ENCODE measurements at regions of chr1 and their contacts with region 1.

Region 1: DNA sequence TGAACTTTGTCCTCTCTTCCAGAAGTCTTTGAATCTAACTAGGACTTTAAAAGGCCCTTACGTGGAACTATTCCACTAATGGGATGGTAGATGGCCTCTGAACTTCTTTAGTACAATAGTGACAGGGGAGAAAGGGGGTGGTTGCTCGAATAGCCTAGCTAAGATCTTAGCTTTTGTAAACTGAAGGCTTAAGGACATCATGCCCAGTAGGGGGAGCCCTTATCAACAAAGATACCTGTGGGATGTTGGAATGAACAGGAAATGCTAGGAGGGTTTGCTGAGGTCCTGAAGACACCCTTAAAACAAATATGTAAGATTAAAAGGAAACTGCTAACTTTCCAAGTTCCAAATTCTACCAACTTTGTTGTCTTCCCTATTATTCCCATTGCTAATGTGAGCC is 33.2 kb downstream of the NHLH2 start:
- DNase-seq: peak in 1 of 2 donors; percentile 71
- ATAC-seq: peak; percentile 42 to 69 (median 68)
- H3K4me3 ChIP-seq: no peak overlapping the region
- H3K4me3 Mint-ChIP-seq: no peak overlapping the region
- H3K27ac ChIP-seq: no peak overlapping the region
- H3K27ac Mint-ChIP-seq: no peak overlapping the region
- H3K4me1 ChIP-seq: no peaks in the 10 kb centered on the region
- H3K4me1 Mint-ChIP-seq: no peaks in the 10 kb centered on the region
- H3K27me3 ChIP-seq: no peaks in the 10 kb centered on the region
- H3K27me3 Mint-ChIP-seq: peaks cover 5 to 29% of the 10 kb centered on the region in 2 donors
- CTCF ChIP-seq: peak; percentile 79

Region 2: DNA sequence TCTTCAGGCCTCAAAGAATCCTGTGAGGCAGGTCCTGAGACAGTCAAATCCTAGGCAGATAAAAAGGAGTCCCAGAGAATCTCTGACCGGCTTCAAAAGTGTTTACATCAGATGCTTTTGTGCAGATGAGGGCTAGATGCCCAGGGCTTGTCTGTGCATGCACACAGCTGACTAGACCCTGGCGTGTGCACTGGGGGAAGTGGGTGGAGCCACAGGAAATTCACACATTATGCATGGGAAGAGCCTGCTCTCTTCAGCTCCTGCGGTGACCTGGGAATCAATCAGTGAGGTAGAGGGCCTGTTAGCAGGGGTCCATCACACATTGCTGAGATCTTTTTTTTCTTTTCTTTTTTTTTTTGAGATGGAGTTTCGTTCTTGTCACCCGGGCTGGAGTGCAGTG is 69.8 kb after region 1 on chr1:
- intact Hi-C with region 1: no loop called
- DNase-seq: no peak
- ATAC-seq: no peak
- H3K4me3 ChIP-seq: no peak overlapping the region
- H3K4me3 Mint-ChIP-seq: no peak overlapping the region
- H3K27ac ChIP-seq: no peak overlapping the region
- H3K27ac Mint-ChIP-seq: no peak overlapping the region
- H3K4me1 ChIP-seq: no peaks in the 10 kb centered on the region
- H3K4me1 Mint-ChIP-seq: no peaks in the 10 kb centered on the region
- H3K27me3 ChIP-seq: no peaks in the 10 kb centered on the region
- H3K27me3 Mint-ChIP-seq: peaks cover 22 to 56% of the 10 kb centered on the region in 2 donors
- CTCF ChIP-seq: no peak

Region 3: DNA sequence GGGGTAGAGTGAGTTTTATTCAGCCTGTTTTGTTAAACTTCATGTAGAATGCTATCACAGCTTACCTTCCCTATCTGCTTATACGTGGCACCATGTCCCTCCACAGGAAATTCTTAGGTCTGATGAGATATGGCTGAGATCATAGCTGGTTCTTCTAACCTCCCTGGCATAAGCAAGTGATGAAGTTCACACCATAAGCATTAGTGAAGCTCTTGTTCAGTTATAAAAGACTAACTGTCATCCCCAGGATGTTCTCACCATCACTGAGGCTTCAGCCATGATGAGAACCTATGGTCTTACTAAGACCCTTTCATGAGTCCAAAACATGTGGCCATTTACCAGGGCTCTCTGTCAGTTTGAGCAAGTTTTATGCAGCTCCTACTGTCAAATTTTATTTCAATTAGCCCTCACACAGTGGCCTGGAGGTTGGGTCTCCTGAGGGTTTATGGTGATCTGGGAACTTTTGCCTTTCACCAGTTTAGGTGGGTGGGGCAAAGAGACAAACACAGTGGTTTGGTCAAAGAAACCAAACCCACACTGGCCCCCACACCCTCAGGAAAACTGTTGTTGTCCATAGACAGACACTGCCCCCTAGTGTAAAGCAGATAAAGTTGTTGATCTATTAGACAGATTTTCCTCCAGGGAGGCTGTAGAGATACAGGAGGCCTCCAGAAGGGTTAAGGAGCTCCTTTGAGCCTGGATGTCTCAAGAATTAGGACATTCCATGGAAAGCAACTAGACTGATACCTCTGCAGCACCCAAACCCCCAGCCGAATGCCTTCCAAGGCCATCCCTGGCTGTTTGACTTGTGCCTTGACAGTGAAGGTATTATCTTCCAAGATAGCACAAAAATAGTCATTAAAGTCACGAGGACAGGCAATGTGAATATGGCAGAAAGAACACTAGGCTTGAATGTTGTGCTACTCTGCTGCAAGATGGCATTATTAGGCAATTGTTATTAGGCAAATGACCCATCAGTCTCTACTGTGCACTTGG is 173.6 kb after region 1 on chr1:
- intact Hi-C with region 1: loop called (anchors 1 kb)
- DNase-seq: peak; percentile 21 to 51
- ATAC-seq: peak; percentile 56 to 63 (median 62)
- H3K4me3 ChIP-seq: no peak overlapping the region
- H3K4me3 Mint-ChIP-seq: no peak overlapping the region
- H3K27ac ChIP-seq: no peak overlapping the region
- H3K27ac Mint-ChIP-seq: peak overlapping the region in 1 of 2 donors; percentile 44
- H3K4me1 ChIP-seq: peaks cover 12% of the 10 kb centered on the region
- H3K4me1 Mint-ChIP-seq: peaks cover 17 to 32% of the 10 kb centered on the region in 2 donors
- H3K27me3 ChIP-seq: no peaks in the 10 kb centered on the region
- H3K27me3 Mint-ChIP-seq: no peaks in the 10 kb centered on the region
- CTCF ChIP-seq: peak; percentile 76

Region 4: DNA sequence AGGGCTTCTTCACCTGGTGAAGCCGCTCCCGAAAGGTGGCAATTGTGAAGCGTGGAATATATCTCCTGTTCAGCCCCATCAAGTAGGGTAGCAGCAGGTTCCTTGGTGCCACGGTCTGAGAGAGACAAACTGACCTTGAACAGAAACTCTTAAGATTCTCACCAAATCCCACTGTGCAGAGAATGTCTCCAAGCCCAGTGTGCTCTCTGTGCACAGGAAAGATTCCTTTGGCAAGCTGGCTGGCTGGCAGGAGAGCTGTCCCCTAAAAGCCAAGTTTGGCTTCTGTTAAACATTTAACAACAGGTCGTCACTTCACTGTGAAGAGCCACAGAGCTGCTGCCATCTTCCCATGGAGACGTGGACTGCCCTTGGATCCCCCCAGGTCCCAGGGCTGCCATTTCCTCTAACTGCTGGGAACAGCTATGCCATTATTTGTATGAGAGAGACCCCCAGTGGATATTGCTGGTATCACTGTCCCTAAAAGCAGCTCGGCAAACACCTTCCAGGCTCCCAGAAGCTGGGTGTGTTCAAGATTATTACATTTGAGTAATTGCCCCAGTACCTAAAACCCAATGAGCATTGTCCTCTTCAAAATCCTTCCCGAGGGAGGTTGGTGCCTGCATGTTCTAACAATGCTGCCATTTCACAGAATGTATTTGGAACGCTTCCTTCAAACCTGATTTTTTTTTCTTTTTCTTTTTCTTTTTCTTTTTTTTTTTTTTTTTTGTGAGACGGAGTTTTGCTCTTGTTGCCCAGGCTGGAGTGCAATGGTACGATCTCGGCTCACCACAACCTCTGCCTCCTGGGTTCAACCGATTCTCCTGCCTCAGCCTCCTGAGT is 691.3 kb after region 1 on chr1:
- intact Hi-C with region 1: loop called (anchors 5 kb)
- DNase-seq: peak; percentile 40 to 79
- ATAC-seq: peak; percentile 64 to 73 (median 70)
- H3K4me3 ChIP-seq: no peak overlapping the region
- H3K4me3 Mint-ChIP-seq: no peak overlapping the region
- H3K27ac ChIP-seq: no peak overlapping the region
- H3K27ac Mint-ChIP-seq: peak overlapping the region; percentile 23 to 73
- H3K4me1 ChIP-seq: peaks cover 39% of the 10 kb centered on the region
- H3K4me1 Mint-ChIP-seq: peaks cover 46 to 59% of the 10 kb centered on the region in 2 donors
- H3K27me3 ChIP-seq: no peaks in the 10 kb centered on the region
- H3K27me3 Mint-ChIP-seq: no peaks in the 10 kb centered on the region
- CTCF ChIP-seq: peak; percentile 79